ENCODE measurements at regions of chr10 and their contacts with region 1.

Region 1: GRCh38 chr10:61835069-61835945 is 66.2 kb upstream of the ARID5B start:
- DNase-seq: no peak
- ATAC-seq: peak in 1 of 2 donors; percentile 89

Region 2: DNA sequence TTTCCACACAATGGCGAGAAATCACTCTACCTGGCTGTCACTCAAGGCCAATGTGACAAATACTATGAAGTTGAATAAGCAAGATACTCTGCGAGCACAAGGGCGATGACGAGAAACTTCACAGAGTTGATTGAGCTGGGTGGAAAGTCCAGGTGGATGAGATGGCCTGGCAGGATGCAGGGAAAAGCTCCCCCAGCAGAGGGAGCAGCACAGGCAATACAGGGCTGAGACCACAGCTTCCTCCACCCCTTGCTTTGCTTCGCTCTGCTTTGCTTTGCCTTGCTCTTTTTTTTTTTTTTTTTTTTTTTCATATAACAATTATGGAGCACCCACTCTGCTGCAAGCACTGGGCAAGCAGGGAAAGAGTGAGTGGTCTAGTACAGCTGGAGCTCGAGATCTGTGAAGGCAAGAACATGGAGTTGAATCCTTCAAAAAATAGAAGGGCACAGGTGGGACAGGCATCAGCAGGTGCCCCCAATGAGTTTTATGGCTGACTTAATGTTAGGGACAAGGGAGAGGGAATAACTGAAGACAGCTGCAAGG is 84.3 kb before region 1 on chr10:
- intact Hi-C with region 1: loop called in 1 of 2 experiments (anchors 10 kb)
- DNase-seq: peak; percentile 55
- ATAC-seq: peak; percentile 74 to 90

Region 3: GRCh38 chr10:61896854-61897661 is 61.8 kb after region 1 on chr10:
- intact Hi-C with region 1: no loop called
- DNase-seq: peak; percentile 69
- ATAC-seq: peak; percentile 85 to 90